ENCODE measurements at regions of chr2 and their contacts with region 1.

Region 1: GRCh38 chr2:64859312-64860212 is 129.6 kb upstream of the SLC1A4 start:
- DNase-seq: peak; percentile 81
- H3K4me3 ChIP-seq: peak overlapping the region; percentile 17
- CTCF ChIP-seq: no peak

Region 2: DNA sequence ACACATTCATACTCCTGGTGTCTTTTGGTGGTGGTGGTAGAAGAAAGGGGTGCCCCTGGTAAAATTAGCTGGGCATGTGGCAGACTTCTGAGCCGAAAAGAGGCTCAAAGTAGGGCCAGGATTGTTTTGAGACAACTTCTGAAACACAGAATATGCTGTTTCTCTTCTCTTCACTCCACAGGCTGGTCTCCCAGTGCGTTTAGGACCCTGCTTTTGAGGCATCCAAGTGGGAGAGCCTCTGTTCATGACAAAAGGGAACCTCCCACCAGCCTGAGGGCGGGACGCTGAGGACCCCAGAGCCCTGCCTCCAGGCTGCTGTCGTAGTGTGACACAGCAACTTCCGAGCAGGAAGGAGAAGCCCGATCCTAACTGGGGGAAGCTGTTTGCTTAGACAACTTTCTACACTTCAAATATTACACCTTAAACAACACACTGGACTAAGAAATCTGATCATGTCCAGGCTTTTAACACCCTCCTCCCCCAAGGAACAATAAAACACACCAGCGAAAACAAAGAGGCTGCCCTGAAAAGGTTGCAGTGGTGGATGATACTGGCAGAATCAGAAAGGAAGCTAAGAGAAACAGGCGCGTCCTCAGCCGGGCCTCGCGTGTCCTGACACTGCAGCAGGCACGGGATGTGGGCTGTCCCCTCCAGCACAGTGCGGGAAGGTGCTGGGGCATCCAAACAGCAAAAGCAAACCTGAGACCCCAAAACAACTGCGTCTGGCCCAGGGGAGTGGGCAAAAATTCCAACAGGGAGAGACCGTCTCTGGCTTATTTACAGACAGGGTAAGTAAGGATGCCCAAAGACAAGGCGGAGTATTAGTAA is 215.2 kb before region 1 on chr2:
- in situ Hi-C with region 1: loop called (anchors 5 kb)
- DNase-seq: peak; percentile 37
- H3K4me3 ChIP-seq: peak overlapping the region; percentile 42
- CTCF ChIP-seq: no peak

Region 3: GRCh38 chr2:64792307-64792706 is 67.3 kb before region 1 on chr2:
- in situ Hi-C with region 1: no loop called
- DNase-seq: no peak
- H3K4me3 ChIP-seq: no peak overlapping the region
- CTCF ChIP-seq: peak; percentile 19

Measured in astrocyte of the cerebellum (primary cell).